ENCODE measurements at regions of chrX and their contacts with region 1.

Region 1: DNA sequence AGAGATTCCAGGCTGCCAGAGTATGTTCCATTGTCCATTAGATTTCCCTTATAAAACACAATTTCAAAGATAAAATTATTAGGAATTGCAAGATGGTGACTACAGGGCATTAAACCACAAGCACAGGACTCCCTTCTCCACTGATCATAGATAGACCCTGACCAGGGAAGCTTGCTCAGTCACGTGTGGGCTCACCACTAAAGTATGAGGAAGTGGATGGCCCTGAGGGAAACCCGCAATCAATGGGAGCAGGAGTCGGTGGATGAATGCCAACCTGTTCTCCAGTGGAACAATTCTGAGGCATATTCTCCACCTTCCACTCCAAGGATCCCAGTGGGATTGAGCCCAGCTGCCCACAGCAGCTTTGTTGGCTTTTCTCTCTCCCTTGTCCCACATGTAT is 515.7 kb downstream of the BCOR start:
- DNase-seq: peak; percentile 64
- H3K4me3 Mint-ChIP-seq: no peak overlapping the region
- H3K27ac Mint-ChIP-seq: peak overlapping the region; percentile 33
- H3K4me1 Mint-ChIP-seq: peaks cover 14% of the 10 kb centered on the region
- H3K27me3 Mint-ChIP-seq: peaks cover 12% of the 10 kb centered on the region
- CTCF ChIP-seq: no peak

Region 2: DNA sequence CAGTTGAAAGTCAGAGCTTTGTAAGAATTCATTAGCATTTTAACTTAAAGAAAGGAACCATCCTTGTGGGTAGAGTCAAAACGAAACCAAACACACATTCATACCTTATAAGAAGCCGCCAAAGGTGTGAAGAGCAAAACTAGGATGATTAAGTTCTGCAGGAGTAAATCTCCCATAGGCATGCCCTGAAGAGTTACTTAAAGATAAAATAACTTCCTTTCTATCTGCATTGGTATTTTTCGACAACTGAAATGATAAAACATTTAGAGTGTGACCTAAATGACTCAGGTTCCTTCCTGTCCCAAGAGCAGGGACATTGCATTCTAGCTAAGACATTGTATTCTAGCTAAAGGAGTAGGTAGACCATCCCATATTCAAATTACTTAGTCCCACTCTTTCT is 440.3 kb after region 1 on chrX:
- CTCF ChIA-PET with region 1: no interaction called
- intact Hi-C with region 1: loop called (anchors 10 kb)
- DNase-seq: no peak
- H3K4me3 Mint-ChIP-seq: no peak overlapping the region
- H3K27ac Mint-ChIP-seq: no peak overlapping the region
- H3K4me1 Mint-ChIP-seq: no peaks in the 10 kb centered on the region
- H3K27me3 Mint-ChIP-seq: no peaks in the 10 kb centered on the region
- CTCF ChIP-seq: no peak